ENCODE measurements at regions of chr18 and their contacts with region 1.

Region 1: DNA sequence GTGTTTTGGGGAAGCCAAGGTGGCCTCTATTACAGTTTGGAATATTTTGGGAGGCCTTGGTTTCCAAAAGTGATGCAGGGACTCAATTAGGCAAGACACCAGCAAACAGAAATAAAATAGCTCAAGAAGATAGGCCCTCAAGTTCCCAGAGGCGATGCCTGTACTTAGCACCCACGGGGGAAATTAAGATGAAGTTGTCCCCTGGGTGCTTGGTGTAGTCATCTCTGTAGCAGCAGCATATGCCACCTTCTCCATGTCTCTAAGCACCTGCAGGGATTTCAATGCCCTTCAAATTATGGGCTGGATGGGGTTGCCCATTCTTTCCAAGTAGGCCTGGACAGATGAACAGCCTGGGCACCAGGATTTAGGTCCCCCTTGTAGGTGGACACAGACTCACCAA is 185.0 kb downstream of the CTIF start:
- DNase-seq: no peak
- ATAC-seq: no peak
- H3K4me3 ChIP-seq: no peak overlapping the region
- H3K27ac ChIP-seq: no peak overlapping the region
- H3K4me1 ChIP-seq: no peaks in the 10 kb centered on the region
- H3K27me3 ChIP-seq: no peaks in the 10 kb centered on the region
- CTCF ChIP-seq: no peak

Region 2: DNA sequence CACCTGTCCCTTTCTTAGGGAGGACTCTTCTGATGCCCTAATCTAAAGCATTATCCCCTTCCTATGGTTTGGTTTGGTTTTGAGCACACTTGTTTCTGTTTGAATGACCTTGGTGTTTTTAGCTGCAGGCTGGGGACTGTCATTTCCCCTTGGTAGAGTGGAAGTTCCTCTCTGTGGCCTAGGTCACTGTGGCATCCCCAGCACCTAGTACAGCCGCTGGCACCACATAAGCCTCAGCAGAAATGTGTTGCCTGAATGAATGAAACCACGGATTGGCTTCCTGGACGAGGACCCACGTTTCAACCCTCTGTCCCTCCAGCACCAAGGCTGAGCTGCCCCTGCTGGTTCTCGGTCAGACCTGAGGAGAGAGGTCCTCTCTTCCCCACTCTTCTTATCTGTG is 25.1 kb before region 1 on chr18:
- intact Hi-C with region 1: loop called in 1 of 3 experiments (anchors 2 kb)
- DNase-seq: no peak
- ATAC-seq: no peak
- H3K4me3 ChIP-seq: no peak overlapping the region
- H3K27ac ChIP-seq: no peak overlapping the region
- H3K4me1 ChIP-seq: no peaks in the 10 kb centered on the region
- H3K27me3 ChIP-seq: no peaks in the 10 kb centered on the region
- CTCF ChIP-seq: no peak

Measured in pancreas (tissue), 10 donors.